Endothelial cell of umbilical vein (primary cell): ENCODE measurements at regions of chr1 and their contacts with region 1.

Region 1: DNA sequence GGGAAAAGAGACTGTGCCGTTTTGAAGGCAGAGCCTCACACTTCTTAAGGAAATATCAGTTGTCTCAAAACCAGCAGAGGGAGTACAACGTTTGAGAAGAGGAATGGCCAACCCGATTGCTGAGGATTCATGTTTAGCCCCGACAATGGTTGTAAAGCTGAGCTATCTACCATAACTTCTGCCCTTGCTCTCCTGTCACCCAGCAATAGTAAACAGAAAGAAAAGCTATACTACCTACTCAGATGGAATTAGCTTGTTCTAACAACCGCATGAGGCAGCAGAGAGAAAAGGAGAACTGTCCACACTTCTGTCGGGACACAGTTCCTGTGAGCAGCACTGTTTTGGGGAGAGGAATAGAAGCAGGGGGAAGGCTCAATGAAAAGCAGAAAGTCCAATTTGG is 91.2 kb downstream of the SLC45A1 start:
- DNase-seq: peak; percentile 76
- H3K4me3 ChIP-seq: no peak overlapping the region
- H3K27ac ChIP-seq: peak overlapping the region; percentile 62
- H3K4me1 ChIP-seq: peaks cover 53% of the 10 kb centered on the region
- H3K27me3 ChIP-seq: no peaks in the 10 kb centered on the region
- CTCF ChIP-seq: peak; percentile 37 to 42
- POLR2A ChIP-seq: no peak

Region 2: GRCh38 chr1:8197493-8198282 is 211.4 kb before region 1 on chr1:
- CTCF ChIA-PET with region 1: no interaction called
- POLR2A ChIA-PET with region 1: no interaction called
- dilution Hi-C with region 1: no loop called
- intact Hi-C with region 1: no loop called
- DNase-seq: peak; percentile 94
- H3K4me3 ChIP-seq: no peak overlapping the region
- H3K27ac ChIP-seq: peak overlapping the region; percentile 18
- H3K4me1 ChIP-seq: peaks cover 24% of the 10 kb centered on the region
- H3K27me3 ChIP-seq: no peaks in the 10 kb centered on the region
- CTCF ChIP-seq: no peak
- POLR2A ChIP-seq: peak; percentile 50

Region 3: DNA sequence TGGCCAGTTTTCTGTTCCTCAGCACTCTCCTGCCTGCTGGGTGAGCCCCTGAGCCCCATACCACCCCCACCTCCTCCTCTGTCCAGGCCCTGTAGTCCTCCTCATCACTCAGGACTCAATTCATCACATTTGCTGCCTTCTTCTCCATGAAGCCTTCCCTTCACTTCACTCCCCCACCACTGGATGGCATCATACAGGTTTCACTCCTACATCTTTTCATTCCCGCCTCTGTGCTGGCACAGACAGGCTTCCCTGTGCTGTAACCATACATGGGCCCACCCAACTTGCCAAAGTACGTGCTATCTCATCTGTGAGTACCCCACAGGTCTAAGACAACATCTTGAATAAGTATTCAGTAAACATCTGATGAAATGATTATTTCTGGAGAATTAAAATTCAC is 34.3 kb before region 1 on chr1:
- CTCF ChIA-PET with region 1: interaction called, 11 read pairs
- POLR2A ChIA-PET with region 1: no interaction called
- dilution Hi-C with region 1: no loop called
- intact Hi-C with region 1: loop called (anchors 1 kb)
- DNase-seq: peak; percentile 55
- H3K4me3 ChIP-seq: no peak overlapping the region
- H3K27ac ChIP-seq: no peak overlapping the region
- H3K4me1 ChIP-seq: peaks cover 24% of the 10 kb centered on the region
- H3K27me3 ChIP-seq: no peaks in the 10 kb centered on the region
- CTCF ChIP-seq: peak; percentile 28 to 47
- POLR2A ChIP-seq: no peak

Region 4: DNA sequence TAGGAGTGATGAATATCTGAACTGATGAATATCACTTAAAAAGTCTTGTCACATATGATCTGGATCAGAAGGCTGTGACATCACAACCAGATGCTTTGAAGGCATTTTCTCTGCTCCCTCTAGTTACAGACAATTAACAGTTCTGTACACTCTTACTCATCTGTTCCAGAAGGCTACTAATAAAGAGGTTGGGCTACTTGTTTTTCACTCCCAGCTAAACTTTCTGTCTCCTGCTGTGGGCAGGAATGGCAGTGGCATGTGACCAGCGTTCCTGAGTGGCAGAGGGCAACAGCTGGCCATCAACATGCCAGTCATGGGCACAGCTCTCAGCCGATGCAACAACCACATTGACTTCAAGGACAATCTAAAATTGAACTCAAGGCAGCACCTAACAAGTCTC is 24.5 kb before region 1 on chr1:
- CTCF ChIA-PET with region 1: interaction called, 10 read pairs
- POLR2A ChIA-PET with region 1: no interaction called
- dilution Hi-C with region 1: no loop called
- intact Hi-C with region 1: loop called (anchors 1 kb)
- DNase-seq: peak; percentile 39
- H3K4me3 ChIP-seq: no peak overlapping the region
- H3K27ac ChIP-seq: peak overlapping the region; percentile 31
- H3K4me1 ChIP-seq: peaks cover 17% of the 10 kb centered on the region
- H3K27me3 ChIP-seq: no peaks in the 10 kb centered on the region
- CTCF ChIP-seq: no peak
- POLR2A ChIP-seq: no peak

Region 5: GRCh38 chr1:8396786-8397406 is 12.2 kb before region 1 on chr1:
- CTCF ChIA-PET with region 1: interaction called, 34 read pairs
- POLR2A ChIA-PET with region 1: interaction called, 3 read pairs
- dilution Hi-C with region 1: no loop called
- intact Hi-C with region 1: loop called (anchors 1 kb)
- DNase-seq: peak; percentile 71
- H3K4me3 ChIP-seq: no peak overlapping the region
- H3K27ac ChIP-seq: peak overlapping the region; percentile 62
- H3K4me1 ChIP-seq: peaks cover 49% of the 10 kb centered on the region
- H3K27me3 ChIP-seq: no peaks in the 10 kb centered on the region
- CTCF ChIP-seq: no peak
- POLR2A ChIP-seq: no peak

Region 6: GRCh38 chr1:8463144-8463927 is 54.2 kb after region 1 on chr1:
- CTCF ChIA-PET with region 1: interaction called, 10 read pairs
- POLR2A ChIA-PET with region 1: interaction called, 3 read pairs
- dilution Hi-C with region 1: no loop called
- intact Hi-C with region 1: no loop called
- DNase-seq: peak; percentile 81
- H3K4me3 ChIP-seq: peak overlapping the region in 1 of 3 experiments; percentile 16
- H3K27ac ChIP-seq: peak overlapping the region; percentile 57
- H3K4me1 ChIP-seq: peaks cover 25% of the 10 kb centered on the region
- H3K27me3 ChIP-seq: no peaks in the 10 kb centered on the region
- CTCF ChIP-seq: no peak
- POLR2A ChIP-seq: no peak

Region 7: GRCh38 chr1:8525558-8526275 is 116.6 kb after region 1 on chr1:
- CTCF ChIA-PET with region 1: interaction called, 10 read pairs
- POLR2A ChIA-PET with region 1: no interaction called
- dilution Hi-C with region 1: no loop called
- intact Hi-C with region 1: no loop called
- DNase-seq: peak; percentile 96
- H3K4me3 ChIP-seq: no peak overlapping the region
- H3K27ac ChIP-seq: no peak overlapping the region
- H3K4me1 ChIP-seq: peaks cover 14% of the 10 kb centered on the region
- H3K27me3 ChIP-seq: no peaks in the 10 kb centered on the region
- CTCF ChIP-seq: no peak
- POLR2A ChIP-seq: peak; percentile 38